Dendritic cell treated with granulocyte-macrophage colony-stimulating factor and Interleukin-4, amounts not matched to agents 40 ng/mL and 50 ng/mL, for 4 days (primary cell): ENCODE measurements at regions of chr2 and their contacts with region 1.

Region 1: DNA sequence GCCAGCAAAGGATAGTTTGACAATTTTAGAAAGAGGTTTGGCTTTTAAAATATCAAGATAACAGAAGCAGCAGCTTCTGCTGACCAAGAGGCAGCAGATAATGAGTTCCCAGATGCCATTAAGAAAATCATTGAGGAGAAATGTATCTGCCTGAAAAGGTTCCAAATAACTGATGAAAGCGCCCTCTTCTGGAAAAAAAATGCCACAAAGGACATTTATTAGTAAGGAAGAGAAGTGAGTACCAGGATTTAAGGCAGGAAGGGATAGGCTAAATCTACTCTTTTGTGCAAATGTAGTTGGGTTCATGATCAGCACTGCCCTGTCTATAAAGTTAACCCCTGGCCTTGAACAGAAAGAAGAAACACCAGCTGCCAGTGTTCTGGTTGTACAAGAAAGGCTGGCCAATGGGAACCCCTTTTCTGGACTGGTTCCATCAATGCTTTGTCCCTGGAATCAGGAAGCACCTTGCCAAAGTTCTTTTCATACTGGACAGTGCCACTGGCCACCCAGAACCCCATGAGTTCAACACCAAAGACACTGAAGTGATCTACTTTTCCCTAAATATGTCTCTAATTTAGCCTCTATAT is 40.6 kb downstream of the DHX57 start:
- H3K4me3 Mint-ChIP-seq: no peak overlapping the region
- H3K27ac Mint-ChIP-seq: peak overlapping the region; percentile 79
- H3K4me1 Mint-ChIP-seq: peaks cover 66% of the 10 kb centered on the region
- H3K27me3 Mint-ChIP-seq: no peaks in the 10 kb centered on the region

Region 2: GRCh38 chr2:38750891-38751595 is 84.1 kb before region 1 on chr2 and contains the start of gene SRSF7:
- intact Hi-C with region 1: loop called (anchors 5 kb)
- H3K4me3 Mint-ChIP-seq: peak within 1 kb of the TSS; percentile 94
- H3K27ac Mint-ChIP-seq: peak within 1 kb of the TSS; percentile 98
- H3K4me1 Mint-ChIP-seq: peaks cover 46% of the 10 kb centered on the region
- H3K27me3 Mint-ChIP-seq: no peaks in the 10 kb centered on the region

Region 3: DNA sequence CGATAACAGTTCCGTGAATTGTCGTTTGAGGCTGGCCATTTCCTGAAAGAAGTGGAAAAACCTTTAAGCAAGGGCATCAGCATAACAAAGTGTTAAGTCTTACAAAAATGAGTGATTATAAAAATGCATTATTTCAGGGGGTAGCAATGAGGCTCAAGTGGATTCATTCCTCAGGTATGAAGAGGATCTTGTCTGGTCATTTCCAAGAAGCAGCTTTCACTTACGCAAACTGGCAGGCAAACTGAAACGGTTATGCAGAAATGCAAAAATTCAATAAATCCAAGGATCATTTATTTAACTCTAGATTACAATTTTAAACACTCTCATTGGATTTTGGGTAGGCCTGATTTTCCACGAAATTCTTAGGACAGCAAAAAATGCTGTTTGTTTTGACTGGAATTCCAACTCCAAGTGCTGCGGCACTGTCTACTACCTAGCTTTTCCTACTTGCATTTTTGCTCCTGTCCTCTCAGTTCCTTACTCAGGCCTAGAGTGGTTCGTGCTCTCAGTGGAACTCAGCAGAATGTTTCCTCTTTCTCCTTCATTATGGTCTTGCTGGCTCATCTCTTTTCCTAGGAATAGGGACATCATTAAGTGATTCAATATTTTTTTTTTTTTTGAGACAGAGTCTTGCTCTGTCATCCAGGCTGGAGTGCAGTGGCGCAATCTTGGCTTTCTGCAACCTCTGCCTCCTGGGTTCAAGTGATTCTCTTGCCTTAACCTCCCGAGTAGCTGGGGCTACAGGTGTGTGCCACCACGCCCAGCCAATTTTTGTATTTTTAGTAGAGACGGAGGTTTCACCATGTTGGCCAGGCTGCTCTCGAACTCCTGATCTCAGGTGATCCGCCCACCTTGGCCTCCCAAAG is 19.3 kb before region 1 on chr2:
- intact Hi-C with region 1: loop called (anchors 2 kb)
- H3K4me3 Mint-ChIP-seq: peak overlapping the region; percentile 20
- H3K27ac Mint-ChIP-seq: peak overlapping the region; percentile 88
- H3K4me1 Mint-ChIP-seq: peaks cover 14% of the 10 kb centered on the region
- H3K27me3 Mint-ChIP-seq: no peaks in the 10 kb centered on the region